Ascending aorta (tissue), 2 donors: ENCODE measurements at regions of chrX and their contacts with region 1.

Region 1: GRCh38 chrX:1391707-1392375 is at the start of gene SLC25A6:
- DNase-seq: peak; percentile 91 to 99
- H3K4me3 ChIP-seq: peak within 1 kb of the TSS; percentile 99 to 100
- H3K27ac ChIP-seq: peak within 1 kb of the TSS; percentile 98 to 99
- H3K4me1 ChIP-seq: peaks cover 7 to 11% of the 10 kb centered on the region in 2 donors
- H3K27me3 ChIP-seq: no peaks in the 10 kb centered on the region
- CTCF ChIP-seq: peak in 1 of 3 experiments; percentile 41
- total RNA-seq, gene SLC25A6: 535 TPM

Region 2: DNA sequence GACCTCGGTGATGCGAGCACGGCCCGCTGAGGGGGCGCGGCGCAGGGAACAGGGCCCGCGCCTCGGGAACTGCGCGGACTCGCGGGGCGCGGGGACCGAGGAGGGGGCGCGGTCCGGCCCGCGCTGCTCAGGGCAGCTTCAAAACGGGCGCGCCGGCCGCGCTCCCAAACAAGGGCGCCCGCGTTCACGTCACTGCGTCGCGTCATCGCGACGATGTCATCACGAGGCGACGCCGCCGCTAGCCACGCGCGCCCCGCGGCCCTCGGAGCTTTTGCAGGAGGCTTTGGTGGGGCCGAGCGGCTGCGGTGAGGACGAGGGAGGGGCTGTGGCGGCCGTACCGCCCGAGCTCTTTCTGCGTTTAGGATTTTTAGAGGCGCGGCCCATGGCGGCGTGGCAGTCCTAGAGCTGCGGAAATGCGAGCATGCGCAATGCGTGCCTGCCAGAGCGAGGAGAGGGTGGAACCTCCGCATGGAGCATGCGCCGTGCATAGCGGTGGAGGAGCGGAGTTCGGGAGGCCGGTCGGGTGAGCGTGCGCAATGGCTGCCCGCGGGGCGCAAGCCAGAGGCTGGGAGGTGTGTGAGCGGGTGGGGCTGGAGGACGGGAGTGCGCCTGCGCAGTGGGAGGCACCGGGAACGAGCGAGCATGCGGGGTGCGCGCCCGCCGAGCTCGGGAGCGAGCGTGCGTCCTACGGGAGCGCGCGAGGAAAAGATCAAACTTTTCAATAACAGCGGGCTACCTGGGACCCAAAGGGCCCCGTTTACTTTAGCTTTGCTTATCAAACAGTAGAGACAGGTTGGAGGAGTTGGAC is 1004.9 kb before region 1 on chrX and contains the start of gene PPP2R3B:
- intact Hi-C with region 1: loop called (anchors 2 kb)
- DNase-seq: peak; percentile 91 to 99
- H3K4me3 ChIP-seq: peak within 1 kb of the TSS; percentile 72 to 92
- H3K27ac ChIP-seq: peak within 1 kb of the TSS; percentile 94 to 99
- H3K4me1 ChIP-seq: peaks cover 0 to 5% of the 10 kb centered on the region in 2 donors
- H3K27me3 ChIP-seq: no peaks in the 10 kb centered on the region
- CTCF ChIP-seq: no peak
- total RNA-seq, gene PPP2R3B: 43.4 TPM

Region 3: GRCh38 chrX:1591102-1591900 is 199.5 kb after region 1 on chrX and contains the start of gene AKAP17A:
- intact Hi-C with region 1: loop called (anchors 1 kb)
- DNase-seq: peak; percentile 80 to 97
- H3K4me3 ChIP-seq: peak within 1 kb of the TSS; percentile 97 to 98
- H3K27ac ChIP-seq: peak within 1 kb of the TSS; percentile 82 to 87
- H3K4me1 ChIP-seq: peaks cover 0 to 9% of the 10 kb centered on the region in 2 donors
- H3K27me3 ChIP-seq: no peaks in the 10 kb centered on the region
- CTCF ChIP-seq: no peak
- total RNA-seq, gene AKAP17A: 74.0 TPM

Region 4: DNA sequence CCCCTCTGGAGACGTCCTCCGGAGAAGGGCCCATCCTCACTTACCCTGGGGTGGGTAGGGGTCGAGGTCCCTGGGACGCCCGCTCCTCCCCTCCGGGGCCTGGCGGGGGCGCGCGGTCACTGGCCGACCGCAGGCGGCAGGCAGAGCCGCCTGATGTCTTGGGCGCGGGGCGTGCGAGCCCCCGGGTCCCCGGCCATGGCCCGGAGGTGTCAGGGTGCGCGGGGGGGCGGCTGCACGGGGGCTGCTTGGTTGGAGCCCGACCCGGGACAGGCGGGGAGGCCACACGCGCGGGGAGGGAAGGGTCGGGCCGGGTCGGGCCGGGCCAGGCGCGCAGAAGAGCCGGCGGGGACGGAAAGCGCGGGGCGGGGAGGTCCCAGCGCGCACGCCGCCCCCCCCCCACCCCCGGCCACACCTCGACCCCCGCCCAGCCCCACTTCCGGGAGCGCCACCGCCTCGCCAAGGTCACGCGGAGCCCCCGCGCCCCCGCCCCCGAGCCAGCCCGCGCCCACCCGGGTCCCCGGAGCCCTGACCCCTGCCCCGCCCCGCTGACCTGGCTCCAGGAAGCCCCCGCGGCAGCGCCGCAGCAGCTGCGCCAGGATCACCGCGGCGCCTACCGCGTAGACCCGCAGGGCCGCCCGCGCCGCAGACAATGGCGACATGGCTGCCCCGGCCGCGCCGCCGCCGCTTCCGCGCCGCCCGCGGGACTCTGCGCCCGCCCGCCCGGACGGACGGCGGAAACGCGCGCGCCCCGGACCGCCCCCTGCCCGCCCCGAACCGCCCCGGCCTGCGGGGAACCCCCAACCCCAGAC is 1108.6 kb after region 1 on chrX and contains the starts of genes DHRSX and ZBED1:
- intact Hi-C with region 1: loop called (anchors 10 kb)
- DNase-seq: no peak
- H3K4me3 ChIP-seq: peak within 1 kb of the TSS; percentile 84 to 99
- H3K27ac ChIP-seq: peak within 1 kb of the TSS; percentile 77 to 91
- H3K4me1 ChIP-seq: peaks cover 7 to 24% of the 10 kb centered on the region in 2 donors
- H3K27me3 ChIP-seq: no peaks in the 10 kb centered on the region
- CTCF ChIP-seq: no peak
- total RNA-seq, gene DHRSX: 13.4 TPM
- total RNA-seq, gene ZBED1: 34.6 TPM

Region 5: DNA sequence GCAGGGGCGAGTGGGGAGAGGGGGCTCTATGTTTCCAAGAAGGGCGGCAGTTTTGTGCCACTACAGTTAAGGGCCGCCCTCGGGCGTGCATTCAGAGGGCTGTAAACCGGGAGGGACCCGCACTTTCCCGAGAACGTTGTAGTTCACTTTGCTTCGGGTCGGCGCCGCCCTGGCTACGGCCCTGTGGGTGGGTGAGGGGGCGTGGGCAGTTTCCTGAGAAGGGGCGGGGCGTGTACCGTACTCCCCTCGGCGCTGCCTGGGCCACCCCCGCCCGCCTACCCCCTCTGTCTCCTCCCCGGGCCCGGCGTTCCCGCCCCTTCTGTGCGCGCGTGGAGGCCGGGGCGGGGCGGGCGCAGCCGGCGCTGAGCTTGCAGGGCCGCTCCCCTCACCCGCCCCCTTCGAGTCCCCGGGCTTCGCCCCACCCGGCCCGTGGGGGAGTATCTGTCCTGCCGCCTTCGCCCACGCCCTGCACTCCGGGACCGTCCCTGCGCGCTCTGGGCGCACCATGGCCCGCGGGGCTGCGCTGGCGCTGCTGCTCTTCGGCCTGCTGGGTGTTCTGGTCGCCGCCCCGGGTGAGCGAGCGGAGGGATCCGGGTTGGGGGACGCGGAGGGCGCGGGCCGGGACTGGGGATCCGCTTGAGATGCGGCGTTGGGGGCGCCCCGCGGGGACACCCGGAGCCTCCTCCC is 1299.2 kb after region 1 on chrX and contains the start of gene CD99:
- intact Hi-C with region 1: loop called (anchors 5 kb)
- DNase-seq: peak; percentile 39 to 96
- H3K4me3 ChIP-seq: peak within 1 kb of the TSS; percentile 86 to 94
- H3K27ac ChIP-seq: peak within 1 kb of the TSS; percentile 76 to 79
- H3K4me1 ChIP-seq: peaks cover 0 to 22% of the 10 kb centered on the region in 2 donors
- H3K27me3 ChIP-seq: no peaks in the 10 kb centered on the region
- CTCF ChIP-seq: no peak
- total RNA-seq, gene CD99: 262 TPM